CD8-positive, alpha-beta T cell (primary cell): ENCODE measurements at regions of chr11 and their contacts with region 1.

Region 1: GRCh38 chr11:65662799-65663638 is at the start of gene RELA:
- DNase-seq: peak; percentile 79 to 95 (median 89)
- ATAC-seq: peak; percentile 83
- H3K4me3 ChIP-seq: peak within 1 kb of the TSS; percentile 77 to 88
- H3K4me3 Mint-ChIP-seq: peak within 1 kb of the TSS; percentile 86
- H3K27ac ChIP-seq: peak within 1 kb of the TSS; percentile 92 to 98
- H3K27ac Mint-ChIP-seq: peak within 1 kb of the TSS; percentile 92
- H3K4me1 ChIP-seq: peaks cover 27% of the 10 kb centered on the region
- H3K4me1 Mint-ChIP-seq: peaks cover 38% of the 10 kb centered on the region
- H3K27me3 ChIP-seq: no peaks in the 10 kb centered on the region
- H3K27me3 Mint-ChIP-seq: no peaks in the 10 kb centered on the region
- CTCF ChIP-seq: no peak
- total RNA-seq, gene RELA: 380 to 384 TPM

Region 2: GRCh38 chr11:65581928-65582327 is 81.1 kb before region 1 on chr11:
- CTCF ChIA-PET with region 1: no interaction called
- POLR2A ChIA-PET with region 1: no interaction called
- intact Hi-C with region 1: no loop called
- DNase-seq: no peak
- ATAC-seq: no peak
- H3K4me3 ChIP-seq: no peak overlapping the region
- H3K4me3 Mint-ChIP-seq: no peak overlapping the region
- H3K27ac ChIP-seq: no peak overlapping the region
- H3K27ac Mint-ChIP-seq: no peak overlapping the region
- H3K4me1 ChIP-seq: peaks cover 16% of the 10 kb centered on the region
- H3K4me1 Mint-ChIP-seq: peaks cover 15% of the 10 kb centered on the region
- H3K27me3 ChIP-seq: no peaks in the 10 kb centered on the region
- H3K27me3 Mint-ChIP-seq: no peaks in the 10 kb centered on the region
- CTCF ChIP-seq: no peak

Region 3: DNA sequence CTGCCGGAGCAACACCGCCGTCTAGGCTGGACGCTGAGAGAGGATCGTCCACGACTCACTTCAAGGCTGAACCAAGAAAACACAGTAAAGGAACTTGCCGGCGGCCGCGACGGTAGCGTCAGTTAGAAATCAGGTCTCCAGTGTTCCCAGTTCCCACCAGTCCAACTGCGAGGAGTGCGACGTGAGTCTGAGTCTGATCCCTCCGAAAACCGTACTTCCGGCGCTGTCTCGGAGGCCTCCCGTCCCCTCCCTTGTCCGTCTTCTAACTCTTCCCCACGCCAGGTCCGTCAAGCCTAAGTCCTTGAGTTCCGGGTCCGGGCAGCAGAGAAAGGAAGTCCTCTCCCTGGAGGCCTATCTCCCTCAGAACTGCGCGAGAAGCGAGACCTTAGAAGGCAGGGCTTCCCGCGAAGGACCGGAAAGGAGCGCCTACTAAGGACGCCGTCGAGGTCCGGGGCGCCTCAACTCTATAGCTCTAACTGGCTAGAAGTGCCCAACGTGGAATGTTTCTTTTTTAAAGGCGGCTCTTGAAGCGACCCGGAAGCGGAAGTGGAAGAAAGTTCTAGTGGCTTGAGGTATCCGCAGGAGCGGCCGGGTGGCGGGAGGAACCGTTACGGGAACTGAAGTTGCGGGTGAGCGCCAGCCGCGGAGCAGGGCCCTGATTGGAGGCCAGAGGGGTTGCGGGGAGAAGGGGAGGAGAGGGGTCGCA is 339.1 kb after region 1 on chr11 and contains the starts of genes BANF1 and EIF1AD:
- CTCF ChIA-PET with region 1: no interaction called
- POLR2A ChIA-PET with region 1: no interaction called
- intact Hi-C with region 1: loop called in 1 of 2 experiments (anchors 2 kb)
- DNase-seq: peak; percentile 85 to 98 (median 92)
- ATAC-seq: peak; percentile 83
- H3K4me3 ChIP-seq: peak within 1 kb of the TSS; percentile 80 to 98
- H3K4me3 Mint-ChIP-seq: peak within 1 kb of the TSS; percentile 99
- H3K27ac ChIP-seq: peak within 1 kb of the TSS; percentile 93 to 95
- H3K27ac Mint-ChIP-seq: peak within 1 kb of the TSS; percentile 98
- H3K4me1 ChIP-seq: peaks cover 21% of the 10 kb centered on the region
- H3K4me1 Mint-ChIP-seq: peaks cover 43% of the 10 kb centered on the region
- H3K27me3 ChIP-seq: no peaks in the 10 kb centered on the region
- H3K27me3 Mint-ChIP-seq: no peaks in the 10 kb centered on the region
- CTCF ChIP-seq: no peak
- total RNA-seq, gene BANF1: 31.6 to 34.0 TPM
- total RNA-seq, gene EIF1AD: 119 to 126 TPM